Spleen (tissue), 13 donors: ENCODE measurements at regions of chr20 and their contacts with region 1.

Region 1: DNA sequence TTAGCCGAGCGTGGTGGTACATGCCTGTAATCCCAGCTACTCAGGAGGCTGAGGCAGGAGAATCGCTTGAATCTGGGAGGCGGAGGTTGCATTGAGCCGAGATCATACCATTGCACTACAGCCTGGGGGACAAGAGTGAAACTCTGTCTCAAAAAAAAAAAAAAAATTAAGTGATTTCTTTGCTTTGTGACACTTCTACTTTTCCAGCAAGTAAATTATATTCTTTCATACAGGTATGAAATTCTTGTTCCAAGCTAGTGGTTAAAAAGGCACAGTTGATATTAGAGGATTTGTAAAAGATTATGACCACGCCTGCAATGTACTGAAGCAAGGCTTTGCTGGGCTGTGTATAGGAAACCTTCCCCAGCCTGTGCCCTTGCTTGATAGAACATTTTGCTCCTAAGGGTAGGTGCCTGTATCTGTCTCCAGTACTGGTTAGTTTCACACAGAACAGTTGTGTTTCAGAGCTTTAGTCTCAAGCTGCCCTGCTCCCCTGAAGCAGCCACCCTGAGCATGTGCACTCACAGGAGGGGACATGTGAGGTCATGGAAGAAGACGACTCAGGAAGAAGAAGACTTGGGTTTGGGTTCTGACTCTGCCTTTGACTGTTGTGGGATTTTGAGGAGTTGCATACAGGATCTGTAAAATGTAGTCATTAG is 10.2 kb downstream of the PTPN1 start:
- DNase-seq: no peak
- H3K4me3 ChIP-seq: peak overlapping the region in 1 of 8 donors; percentile 37
- H3K27ac ChIP-seq: peak overlapping the region; percentile 44 to 99 (median 96)
- H3K4me1 ChIP-seq: peaks cover 90 to 100% (median 99%) of the 10 kb centered on the region in 6 donors
- H3K27me3 ChIP-seq: no peaks in the 10 kb centered on the region
- CTCF ChIP-seq: no peak
- POLR2A ChIP-seq: peak in 1 of 3 donors; percentile 20

Region 2: DNA sequence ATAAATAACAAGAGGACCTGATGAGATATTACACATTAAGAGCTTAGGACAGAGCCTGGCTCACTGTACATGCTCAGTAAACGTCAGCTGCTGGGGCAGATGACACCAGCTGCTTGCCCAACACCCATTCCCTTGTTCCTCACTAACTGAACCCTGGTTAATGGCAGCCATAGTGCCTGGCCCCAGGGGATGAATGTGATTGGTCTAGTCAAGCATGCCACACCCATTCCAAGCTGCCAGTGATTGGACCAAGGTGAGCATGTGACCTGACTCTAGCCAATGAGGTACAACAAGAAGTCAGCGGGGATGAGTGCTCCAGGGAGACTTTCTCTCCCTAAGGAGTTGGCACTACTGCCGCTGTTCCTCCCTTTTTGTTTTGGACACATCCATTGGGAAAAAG is 95.3 kb before region 1 on chr20:
- intact Hi-C with region 1: no loop called
- DNase-seq: no peak
- H3K4me3 ChIP-seq: no peak overlapping the region
- H3K27ac ChIP-seq: no peak overlapping the region
- H3K4me1 ChIP-seq: peaks cover 0 to 28% (median 4%) of the 10 kb centered on the region in 6 donors
- H3K27me3 ChIP-seq: peaks cover 0 to 10% (median 0%) of the 10 kb centered on the region in 7 donors
- CTCF ChIP-seq: no peak
- POLR2A ChIP-seq: no peak

Region 3: DNA sequence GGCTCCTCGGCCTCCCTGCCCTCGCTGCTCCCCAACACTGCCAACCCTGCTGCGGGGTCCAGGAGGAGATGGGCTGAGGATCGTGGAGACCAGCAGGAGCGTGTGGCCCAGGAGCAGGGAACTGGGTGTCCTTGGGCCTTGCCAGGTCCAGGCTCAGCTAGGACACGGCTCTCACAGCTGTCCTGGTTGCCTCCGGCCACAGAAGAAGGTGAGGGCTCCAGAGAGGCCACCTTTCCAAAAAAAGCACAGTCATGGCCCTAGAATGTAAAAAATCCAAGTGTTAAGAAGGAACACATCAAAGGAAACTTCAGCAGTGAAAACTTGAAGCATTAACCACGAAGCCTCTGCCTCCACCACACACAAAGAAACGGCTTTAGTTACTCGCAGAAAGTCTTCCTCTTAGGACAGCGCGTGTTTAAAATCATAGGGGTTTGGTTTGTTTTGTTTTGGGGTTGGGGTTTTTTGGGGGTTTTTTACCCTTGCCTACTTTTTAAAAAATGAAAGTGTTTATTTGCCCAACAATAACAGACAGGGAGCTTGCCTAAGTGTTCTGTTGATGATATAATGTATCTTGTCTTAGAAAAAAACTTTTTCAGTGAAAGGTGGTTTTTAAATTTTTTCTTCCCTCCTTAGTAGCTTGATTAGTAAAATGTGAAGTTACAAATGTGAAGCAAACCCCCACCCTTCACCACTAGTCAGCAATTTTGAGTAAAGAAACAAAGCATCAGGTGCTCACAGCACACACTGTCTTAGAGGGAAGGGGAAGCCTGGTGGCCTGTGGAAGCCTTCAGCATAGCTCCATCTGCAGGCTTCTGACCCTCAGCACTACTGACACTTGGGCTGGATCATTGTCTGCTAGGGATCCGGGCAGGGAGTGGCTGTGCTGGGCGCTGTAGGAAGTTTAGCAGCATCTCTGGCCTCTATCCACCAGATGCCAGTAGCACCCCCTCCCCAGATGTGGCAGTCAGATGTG is 49.8 kb after region 1 on chr20:
- intact Hi-C with region 1: loop called (anchors 5 kb)
- DNase-seq: no peak
- H3K4me3 ChIP-seq: no peak overlapping the region
- H3K27ac ChIP-seq: peak overlapping the region in 7 of 8 donors; percentile 3 to 74 (median 59)
- H3K4me1 ChIP-seq: peaks cover 14 to 97% (median 58%) of the 10 kb centered on the region in 6 donors
- H3K27me3 ChIP-seq: no peaks in the 10 kb centered on the region
- CTCF ChIP-seq: peak in 8 of 11 experiments; percentile 20 to 57 (median 50)
- POLR2A ChIP-seq: no peak

Region 4: DNA sequence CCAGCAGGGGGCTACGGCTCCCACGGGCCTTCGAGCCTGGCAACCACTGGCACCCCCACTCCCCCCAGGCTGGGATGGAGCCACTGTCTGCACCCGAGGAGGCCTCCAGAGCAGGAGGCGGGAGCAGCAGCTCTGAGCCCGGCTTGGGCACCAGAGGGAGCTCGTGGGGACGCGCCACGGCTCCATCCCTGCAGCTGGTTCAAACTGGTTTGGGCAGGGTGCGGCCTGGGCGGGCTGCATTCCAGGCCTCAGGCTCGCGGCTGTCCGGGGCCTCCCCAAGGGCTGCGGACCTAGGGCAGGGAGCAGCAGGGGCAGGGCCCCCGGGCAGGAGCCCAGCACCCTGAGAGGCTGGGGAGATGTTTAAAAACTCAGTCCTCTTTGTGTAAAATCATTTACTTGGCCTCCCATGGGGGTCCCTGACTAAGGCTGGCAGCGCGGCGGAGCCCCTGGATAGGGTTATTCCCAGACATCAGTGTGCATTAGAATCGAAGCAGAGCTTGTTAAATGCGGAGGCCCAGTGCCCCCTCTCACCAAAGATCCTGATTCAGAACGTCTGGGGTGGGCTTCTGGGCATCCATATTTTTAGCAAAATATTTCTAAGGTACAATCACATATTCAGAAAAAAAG is 270.4 kb after region 1 on chr20:
- intact Hi-C with region 1: no loop called
- DNase-seq: peak; percentile 95
- H3K4me3 ChIP-seq: peak overlapping the region in 1 of 8 donors; percentile 55
- H3K27ac ChIP-seq: peak overlapping the region; percentile 14 to 86 (median 74)
- H3K4me1 ChIP-seq: peaks cover 12 to 44% (median 28%) of the 10 kb centered on the region in 6 donors
- H3K27me3 ChIP-seq: peaks cover 0 to 6% (median 0%) of the 10 kb centered on the region in 7 donors
- CTCF ChIP-seq: peak; percentile 44 to 86 (median 74)
- POLR2A ChIP-seq: no peak